ENCODE measurements at regions of chr11 and their contacts with region 1.

Region 1: GRCh38 chr11:615504-616319 is at the start of gene IRF7:
- DNase-seq: peak; percentile 100
- ATAC-seq: peak; percentile 93
- total RNA-seq, gene IRF7: 13.2 TPM

Region 2: GRCh38 chr11:575996-576768 is 39.5 kb before region 1 on chr11 and contains the start of gene PHRF1:
- intact Hi-C with region 1: loop called (anchors 5 kb)
- DNase-seq: peak; percentile 98
- ATAC-seq: peak; percentile 94
- total RNA-seq, gene PHRF1: 16.6 TPM

Region 3: DNA sequence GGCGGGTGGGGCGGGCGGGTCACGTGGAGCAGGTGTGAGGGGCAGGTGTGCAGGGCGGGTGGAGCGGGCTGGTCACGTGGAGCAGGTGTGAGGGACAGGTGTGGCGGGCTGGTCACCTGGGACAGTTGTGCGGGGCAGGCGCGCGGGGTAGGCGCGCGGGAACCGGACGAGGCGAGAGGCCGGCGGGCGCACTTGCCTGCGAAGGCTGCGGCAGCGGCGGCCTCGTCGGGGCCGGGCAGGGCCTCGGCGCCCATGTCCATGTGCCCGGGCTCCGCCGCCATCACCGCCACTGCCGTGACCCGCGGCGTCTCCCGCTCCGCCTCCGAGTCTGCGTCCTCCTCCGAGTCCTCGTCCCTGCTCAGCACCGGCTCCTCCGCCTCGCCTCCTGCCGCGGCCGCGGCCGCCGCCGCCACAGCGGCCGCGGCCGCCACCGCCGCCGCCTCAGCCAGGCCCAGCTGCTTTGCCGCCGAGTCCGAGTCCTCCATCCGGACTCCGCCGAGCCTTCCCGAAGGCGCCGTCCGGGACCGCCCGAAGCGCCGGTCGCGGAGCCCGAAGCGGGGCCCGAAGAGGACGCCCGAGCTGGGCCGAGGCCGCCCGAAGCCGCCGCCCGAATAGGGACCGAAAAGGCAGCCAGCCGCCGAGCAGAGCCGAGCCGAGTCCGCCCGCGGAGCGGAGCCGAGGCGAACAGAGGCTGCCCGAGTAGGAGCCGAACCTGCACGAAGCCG is 79.0 kb after region 1 on chr11 and contains the start of gene DEAF1:
- intact Hi-C with region 1: loop called (anchors 5 kb)
- DNase-seq: peak; percentile 99
- ATAC-seq: peak; percentile 94
- total RNA-seq, gene DEAF1: 20.6 TPM